Endothelial cell of umbilical vein (primary cell): ENCODE measurements at regions of chr2 and their contacts with region 1.

Region 1: DNA sequence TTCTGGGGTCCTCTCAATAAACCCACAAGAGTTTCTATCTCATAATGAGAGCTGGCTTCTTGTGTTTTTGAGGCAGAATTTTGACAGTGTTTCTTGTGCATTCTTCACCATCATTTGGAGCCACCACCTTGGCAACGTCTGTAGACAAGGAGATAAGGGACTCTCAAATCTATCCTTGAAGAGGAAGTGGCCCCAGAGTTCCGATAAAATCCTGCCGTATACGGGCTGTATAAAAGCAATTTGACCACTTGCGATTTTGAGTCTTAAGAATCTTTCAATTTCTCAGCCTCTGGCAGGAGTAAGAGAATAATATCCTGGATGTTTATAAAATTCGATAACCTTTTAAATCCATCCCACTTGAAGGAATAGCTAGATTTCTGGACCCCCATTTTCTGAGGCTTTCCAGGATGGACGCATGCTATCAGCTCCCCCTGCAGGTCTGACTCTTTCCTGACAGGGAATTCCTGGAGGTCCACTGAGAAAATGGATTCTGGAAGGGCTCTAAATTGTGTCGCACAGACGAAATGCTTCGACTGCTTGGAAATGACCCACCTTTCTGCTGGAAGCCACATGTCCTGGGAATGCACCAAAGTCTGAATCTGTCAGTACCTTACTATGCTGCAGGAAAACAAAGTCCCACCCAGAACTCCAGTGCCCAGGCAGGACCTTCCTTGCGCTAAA is 54.1 kb downstream of the E2F6 start:
- DNase-seq: peak; percentile 67
- H3K4me3 ChIP-seq: peak overlapping the region; percentile 16 to 70 (median 16)
- H3K27ac ChIP-seq: no peak overlapping the region
- H3K4me1 ChIP-seq: no peaks in the 10 kb centered on the region
- H3K27me3 ChIP-seq: no peaks in the 10 kb centered on the region
- CTCF ChIP-seq: peak; percentile 75 to 79
- POLR2A ChIP-seq: no peak

Region 2: DNA sequence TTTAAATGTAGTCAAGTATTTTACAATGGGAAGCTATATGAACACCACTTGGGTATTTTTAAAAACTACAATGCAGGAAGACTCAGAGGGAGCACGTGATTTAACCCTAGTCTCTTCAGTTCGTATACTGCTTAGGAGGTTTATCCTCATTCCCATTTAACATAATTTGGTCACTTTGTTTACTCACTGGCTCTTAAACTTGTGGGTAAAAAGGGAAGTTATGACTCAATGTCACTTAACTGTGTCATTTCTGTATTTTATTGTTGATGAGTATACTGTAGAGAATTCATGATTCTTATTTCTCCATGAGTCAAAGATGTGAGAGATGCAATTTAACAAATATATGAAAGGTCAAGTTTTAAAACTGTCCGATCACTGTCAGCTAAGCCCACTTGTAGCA is 208.4 kb before region 1 on chr2:
- CTCF ChIA-PET with region 1: interaction called, 16 read pairs
- POLR2A ChIA-PET with region 1: no interaction called
- dilution Hi-C with region 1: no loop called
- intact Hi-C with region 1: no loop called
- DNase-seq: peak; percentile 71
- H3K4me3 ChIP-seq: no peak overlapping the region
- H3K27ac ChIP-seq: peak overlapping the region; percentile 84
- H3K4me1 ChIP-seq: peaks cover 27% of the 10 kb centered on the region
- H3K27me3 ChIP-seq: no peaks in the 10 kb centered on the region
- CTCF ChIP-seq: no peak
- POLR2A ChIP-seq: no peak

Region 3: DNA sequence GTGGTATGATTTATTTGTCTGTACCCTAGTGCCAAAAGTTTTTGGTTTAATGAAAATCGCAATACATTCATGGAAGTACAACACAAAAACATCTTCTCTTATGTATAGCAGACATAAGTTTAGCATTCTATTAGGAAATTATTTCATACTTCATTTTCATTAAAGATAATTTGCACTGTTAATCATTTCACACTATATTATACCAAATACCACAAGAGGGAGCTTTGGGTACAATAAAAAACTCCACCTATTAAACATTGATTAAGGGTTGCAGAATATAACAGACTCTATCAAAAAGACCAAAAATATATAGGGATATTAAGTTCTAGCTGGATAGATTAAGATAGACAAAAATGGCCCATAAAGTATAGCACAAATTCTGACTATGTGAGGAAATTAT is 177.6 kb before region 1 on chr2:
- CTCF ChIA-PET with region 1: interaction called, 364 read pairs
- POLR2A ChIA-PET with region 1: interaction called, 3 read pairs
- dilution Hi-C with region 1: no loop called
- intact Hi-C with region 1: loop called (anchors 1 kb)
- DNase-seq: peak; percentile 46
- H3K4me3 ChIP-seq: no peak overlapping the region
- H3K27ac ChIP-seq: no peak overlapping the region
- H3K4me1 ChIP-seq: no peaks in the 10 kb centered on the region
- H3K27me3 ChIP-seq: no peaks in the 10 kb centered on the region
- CTCF ChIP-seq: peak; percentile 17 to 21
- POLR2A ChIP-seq: no peak

Region 4: GRCh38 chr2:11320698-11321492 is 91.0 kb before region 1 on chr2:
- CTCF ChIA-PET with region 1: interaction called, 12 read pairs
- POLR2A ChIA-PET with region 1: no interaction called
- dilution Hi-C with region 1: no loop called
- intact Hi-C with region 1: no loop called
- DNase-seq: no peak
- H3K4me3 ChIP-seq: no peak overlapping the region
- H3K27ac ChIP-seq: no peak overlapping the region
- H3K4me1 ChIP-seq: peaks cover 3% of the 10 kb centered on the region
- H3K27me3 ChIP-seq: no peaks in the 10 kb centered on the region
- CTCF ChIP-seq: no peak
- POLR2A ChIP-seq: no peak

Region 5: DNA sequence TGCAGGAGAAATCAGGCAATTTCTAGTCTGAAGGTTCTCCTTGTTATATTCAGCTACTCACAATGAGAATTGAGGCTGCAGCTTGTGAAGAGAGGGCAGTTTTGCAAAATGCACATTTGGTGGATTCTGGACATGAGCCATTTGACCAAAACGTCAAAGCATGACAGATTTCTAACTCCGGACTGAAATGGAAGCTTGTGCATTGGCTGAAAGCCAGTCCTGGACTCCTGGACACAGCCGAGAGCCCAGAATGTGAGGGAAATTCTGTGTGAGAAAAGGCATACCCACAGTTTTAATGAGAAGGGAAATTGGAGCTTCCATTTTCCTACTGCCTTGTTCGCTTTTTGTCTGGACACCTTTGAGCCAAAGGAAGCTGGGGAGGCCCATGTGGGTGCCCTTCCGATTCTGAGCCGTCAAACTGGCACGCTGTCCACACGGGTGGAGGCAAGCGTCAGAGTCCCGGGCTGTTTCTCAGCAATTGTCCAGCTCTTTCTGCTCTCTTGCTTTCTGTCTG is 43.8 kb before region 1 on chr2:
- CTCF ChIA-PET with region 1: interaction called, 27 read pairs
- POLR2A ChIA-PET with region 1: no interaction called
- dilution Hi-C with region 1: no loop called
- intact Hi-C with region 1: no loop called
- DNase-seq: peak; percentile 65
- H3K4me3 ChIP-seq: peak overlapping the region in 1 of 3 experiments; percentile 32
- H3K27ac ChIP-seq: peak overlapping the region; percentile 16
- H3K4me1 ChIP-seq: peaks cover 16% of the 10 kb centered on the region
- H3K27me3 ChIP-seq: no peaks in the 10 kb centered on the region
- CTCF ChIP-seq: no peak
- POLR2A ChIP-seq: no peak

Region 6: DNA sequence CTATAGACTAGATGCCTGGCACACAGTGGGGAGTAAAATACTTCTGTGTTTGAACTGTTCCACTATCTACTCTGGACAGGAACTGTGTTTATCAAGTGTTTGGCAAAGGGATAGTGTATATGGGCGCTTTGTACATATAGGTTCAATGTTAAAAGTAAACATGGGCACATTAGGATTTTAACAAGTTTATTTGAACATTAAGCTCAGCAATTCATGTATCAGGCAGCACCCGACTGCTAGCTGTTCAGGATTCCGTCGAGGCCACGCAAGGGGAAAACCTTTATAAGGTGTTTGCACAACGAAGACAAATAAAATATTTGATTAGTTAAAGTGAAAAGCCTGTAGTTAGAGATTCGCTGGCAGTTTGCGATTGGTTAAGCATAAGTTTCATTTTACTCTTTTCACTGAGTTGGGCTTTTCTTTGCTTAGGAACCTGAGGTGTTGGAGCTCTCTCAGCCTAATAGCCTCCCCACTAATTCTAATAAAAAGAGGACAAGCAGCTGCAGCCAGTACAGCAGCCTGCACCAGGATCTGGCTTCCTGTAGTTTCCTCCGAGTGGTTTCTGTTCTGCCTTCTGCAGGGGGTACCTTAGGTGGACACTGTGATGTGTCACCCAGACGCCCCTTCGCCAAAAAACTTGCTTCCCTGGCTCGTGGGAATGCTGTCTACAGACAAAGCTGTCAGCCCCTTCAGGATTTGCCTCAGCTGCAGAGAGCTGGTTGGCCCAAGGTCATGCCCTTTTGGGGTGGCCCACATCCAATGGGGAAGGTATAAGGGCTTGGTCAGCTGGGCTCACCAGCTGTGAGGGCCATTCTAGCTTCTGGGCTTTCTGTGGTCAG is 23.8 kb before region 1 on chr2:
- CTCF ChIA-PET with region 1: interaction called, 10 read pairs
- POLR2A ChIA-PET with region 1: no interaction called
- dilution Hi-C with region 1: no loop called
- intact Hi-C with region 1: no loop called
- DNase-seq: no peak
- H3K4me3 ChIP-seq: no peak overlapping the region
- H3K27ac ChIP-seq: no peak overlapping the region
- H3K4me1 ChIP-seq: peaks cover 20% of the 10 kb centered on the region
- H3K27me3 ChIP-seq: no peaks in the 10 kb centered on the region
- CTCF ChIP-seq: no peak
- POLR2A ChIP-seq: no peak

Region 7: DNA sequence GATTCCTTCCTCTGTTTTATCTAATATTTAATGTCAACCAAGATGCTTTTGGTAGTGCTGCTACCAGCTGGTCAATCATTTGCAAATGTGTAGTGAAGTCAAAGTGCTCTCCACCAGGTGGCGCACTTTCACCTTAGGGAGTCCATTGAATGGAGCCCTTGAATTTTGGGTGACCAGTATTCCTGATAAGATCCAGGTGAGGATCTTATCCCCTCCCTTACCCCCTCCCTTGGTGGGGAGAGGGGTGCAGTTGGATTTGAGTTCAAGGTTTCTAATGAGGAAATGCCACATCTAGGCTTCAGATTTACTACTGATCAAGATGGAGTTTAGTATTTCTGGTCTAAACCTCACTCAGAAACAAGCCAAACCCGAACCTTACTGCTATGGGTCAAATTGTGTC is 66.1 kb after region 1 on chr2:
- CTCF ChIA-PET with region 1: no interaction called
- POLR2A ChIA-PET with region 1: no interaction called
- dilution Hi-C with region 1: no loop called
- intact Hi-C with region 1: no loop called
- DNase-seq: peak; percentile 69
- H3K4me3 ChIP-seq: no peak overlapping the region
- H3K27ac ChIP-seq: no peak overlapping the region
- H3K4me1 ChIP-seq: no peaks in the 10 kb centered on the region
- H3K27me3 ChIP-seq: peaks cover 25 to 41% of the 10 kb centered on the region in 2 experiments
- CTCF ChIP-seq: peak; percentile 68 to 73
- POLR2A ChIP-seq: no peak